ENCODE measurements at regions of chr11 and their contacts with region 1.

Region 1: GRCh38 chr11:100776212-100776896 is 89.3 kb downstream of the ARHGAP42 start:
- DNase-seq: peak in 2 of 3 donors; percentile 40 to 46
- ATAC-seq: peak; percentile 82
- H3K4me3 ChIP-seq: no peak overlapping the region
- H3K4me1 ChIP-seq: peaks cover 23% of the 10 kb centered on the region
- CTCF ChIP-seq: no peak

Region 2: DNA sequence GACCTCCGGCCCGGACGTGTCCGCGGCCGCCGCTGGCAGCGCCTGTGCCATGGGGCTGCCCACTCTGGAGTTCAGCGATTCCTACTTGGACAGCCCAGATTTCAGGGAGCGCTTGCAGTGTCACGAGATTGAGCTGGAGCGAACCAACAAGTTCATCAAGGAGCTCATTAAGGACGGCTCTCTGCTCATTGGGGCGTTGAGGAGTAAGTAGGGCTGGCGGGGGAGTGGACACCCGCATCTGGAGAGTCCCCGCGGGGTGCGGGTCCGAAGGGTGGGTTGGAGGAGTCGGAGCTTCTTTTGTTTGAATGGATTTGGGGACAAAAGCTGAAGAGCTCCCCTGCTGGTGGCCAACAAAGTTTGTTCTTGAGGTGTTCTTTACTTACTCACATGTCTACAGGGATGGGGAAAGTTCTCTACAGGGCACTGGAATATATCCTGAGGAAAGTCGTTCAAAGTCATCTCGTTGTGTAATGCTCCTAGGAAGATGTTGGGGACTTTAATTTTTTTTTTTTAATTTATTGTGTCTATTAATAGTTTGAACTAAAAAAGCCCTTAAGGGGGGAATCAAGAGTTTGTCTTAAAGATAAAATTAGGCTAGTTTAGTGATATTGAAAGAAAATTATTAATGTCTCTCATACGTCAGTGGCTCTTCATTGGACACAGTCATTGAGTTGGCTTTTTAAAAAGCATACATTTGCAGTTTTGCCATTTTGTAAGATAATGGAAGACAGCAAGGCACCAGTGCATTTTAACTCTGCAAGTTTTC is 88.5 kb before region 1 on chr11:
- intact Hi-C with region 1: loop called in 1 of 2 experiments (anchors 10 kb)
- DNase-seq: peak; percentile 56 to 69 (median 69)
- ATAC-seq: peak; percentile 83
- H3K4me3 ChIP-seq: peak overlapping the region; percentile 52
- H3K4me1 ChIP-seq: no peaks in the 10 kb centered on the region
- CTCF ChIP-seq: peak; percentile 27